Calu3 (cell line): ENCODE measurements at regions of chr5 and their contacts with region 1.

Region 1: GRCh38 chr5:169302491-169303118 is 1.7 kb upstream of the SLIT3 start:
- DNase-seq: peak; percentile 81
- H3K4me3 Mint-ChIP-seq: no peak overlapping the region
- H3K27ac Mint-ChIP-seq: no peak overlapping the region
- H3K4me1 Mint-ChIP-seq: no peaks in the 10 kb centered on the region
- H3K27me3 Mint-ChIP-seq: peaks cover 37% of the 10 kb centered on the region
- CTCF ChIP-seq: peak; percentile 70

Region 2: DNA sequence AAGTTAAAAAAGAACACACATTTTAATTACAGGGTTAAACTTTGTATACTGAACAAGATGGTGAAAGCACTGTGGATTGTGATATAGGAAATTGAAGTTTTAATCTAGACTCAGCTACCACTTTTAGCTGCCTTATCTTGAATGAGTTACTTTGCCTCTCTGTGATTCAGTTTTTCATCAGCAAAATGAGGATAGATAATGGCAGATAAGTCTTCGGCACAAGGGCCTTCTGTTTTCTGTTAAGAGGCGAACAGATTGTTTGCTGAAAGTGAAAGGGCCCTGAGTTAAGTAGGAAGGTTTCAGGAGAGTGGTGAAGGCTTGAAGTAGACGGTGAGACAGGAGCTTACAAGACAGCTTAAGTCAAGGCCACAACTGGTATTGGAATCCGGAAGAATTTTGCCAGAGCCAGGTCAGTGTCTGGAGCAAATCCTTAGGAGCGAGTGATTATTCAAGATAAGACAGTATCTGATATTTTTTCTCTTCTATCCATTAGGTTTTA is 808.5 kb before region 1 on chr5:
- CTCF ChIA-PET with region 1: no interaction called
- intact Hi-C with region 1: loop called (anchors 5 kb)
- DNase-seq: no peak
- H3K4me3 Mint-ChIP-seq: no peak overlapping the region
- H3K27ac Mint-ChIP-seq: no peak overlapping the region
- H3K4me1 Mint-ChIP-seq: peaks cover 9% of the 10 kb centered on the region
- H3K27me3 Mint-ChIP-seq: no peaks in the 10 kb centered on the region
- CTCF ChIP-seq: no peak

Region 3: DNA sequence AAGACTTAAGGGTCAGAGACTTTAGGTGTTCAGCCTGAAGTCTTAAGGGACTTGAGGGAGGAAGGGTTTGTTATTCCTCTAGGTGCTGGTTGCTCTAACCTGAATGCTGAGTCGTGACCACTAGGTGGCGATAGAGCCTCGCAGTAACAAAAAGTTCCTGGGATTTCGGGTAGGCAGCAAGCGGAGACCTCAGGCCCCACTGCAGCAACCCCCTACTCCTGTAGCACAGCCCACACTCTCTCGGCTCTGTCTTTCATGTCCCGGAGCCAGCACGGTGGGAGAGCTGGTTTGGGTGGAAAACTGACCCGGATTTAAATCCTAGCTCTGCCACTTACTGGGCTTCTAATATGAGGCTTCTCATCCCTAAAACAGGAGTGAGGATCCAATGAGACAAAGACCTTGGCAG is 623.1 kb before region 1 on chr5:
- CTCF ChIA-PET with region 1: no interaction called
- intact Hi-C with region 1: loop called (anchors 2 kb)
- DNase-seq: peak; percentile 79
- H3K4me3 Mint-ChIP-seq: no peak overlapping the region
- H3K27ac Mint-ChIP-seq: no peak overlapping the region
- H3K4me1 Mint-ChIP-seq: no peaks in the 10 kb centered on the region
- H3K27me3 Mint-ChIP-seq: peaks cover 13% of the 10 kb centered on the region
- CTCF ChIP-seq: peak; percentile 96

Region 4: DNA sequence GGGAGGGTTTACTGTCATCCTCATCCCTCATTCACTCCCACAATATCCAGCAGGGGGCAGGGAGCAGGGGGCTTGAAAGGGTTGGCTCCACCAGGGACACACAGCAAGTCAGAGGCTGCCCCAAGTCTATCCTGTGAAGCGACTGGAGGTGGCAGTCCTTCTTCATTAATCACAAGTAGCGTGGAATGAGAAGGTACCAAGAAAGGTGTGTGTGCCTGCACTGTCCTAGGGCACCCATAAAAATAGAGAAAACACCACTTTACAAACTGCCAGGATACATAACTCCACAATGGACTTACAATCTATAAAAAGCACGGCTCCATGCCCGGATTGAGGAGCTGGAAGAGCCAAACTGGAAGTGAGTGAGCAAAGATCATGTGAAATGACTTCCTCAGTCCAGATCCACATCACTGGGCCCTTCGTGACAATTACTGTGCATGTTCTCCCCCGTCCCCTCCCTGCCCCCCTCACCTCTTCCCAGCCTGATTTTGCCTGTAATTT is 185.6 kb before region 1 on chr5:
- CTCF ChIA-PET with region 1: no interaction called
- intact Hi-C with region 1: loop called (anchors 5 kb)
- DNase-seq: peak; percentile 8
- H3K4me3 Mint-ChIP-seq: no peak overlapping the region
- H3K27ac Mint-ChIP-seq: no peak overlapping the region
- H3K4me1 Mint-ChIP-seq: no peaks in the 10 kb centered on the region
- H3K27me3 Mint-ChIP-seq: peaks cover 25% of the 10 kb centered on the region
- CTCF ChIP-seq: no peak